ENCODE measurements at regions of chr2 and their contacts with region 1.

Region 1: GRCh38 chr2:240851078-240851991 is 17.3 kb upstream of the AGXT start:
- DNase-seq: peak; percentile 84
- ATAC-seq: peak; percentile 90 to 93 (median 91)
- H3K4me3 ChIP-seq: no peak overlapping the region
- H3K27ac ChIP-seq: no peak overlapping the region
- H3K4me1 ChIP-seq: peaks cover 0 to 3% (median 0%) of the 10 kb centered on the region in 9 donors
- H3K27me3 ChIP-seq: peaks cover 0 to 8% (median 0%) of the 10 kb centered on the region in 7 donors
- CTCF ChIP-seq: peak; percentile 85 to 98 (median 96)

Region 2: DNA sequence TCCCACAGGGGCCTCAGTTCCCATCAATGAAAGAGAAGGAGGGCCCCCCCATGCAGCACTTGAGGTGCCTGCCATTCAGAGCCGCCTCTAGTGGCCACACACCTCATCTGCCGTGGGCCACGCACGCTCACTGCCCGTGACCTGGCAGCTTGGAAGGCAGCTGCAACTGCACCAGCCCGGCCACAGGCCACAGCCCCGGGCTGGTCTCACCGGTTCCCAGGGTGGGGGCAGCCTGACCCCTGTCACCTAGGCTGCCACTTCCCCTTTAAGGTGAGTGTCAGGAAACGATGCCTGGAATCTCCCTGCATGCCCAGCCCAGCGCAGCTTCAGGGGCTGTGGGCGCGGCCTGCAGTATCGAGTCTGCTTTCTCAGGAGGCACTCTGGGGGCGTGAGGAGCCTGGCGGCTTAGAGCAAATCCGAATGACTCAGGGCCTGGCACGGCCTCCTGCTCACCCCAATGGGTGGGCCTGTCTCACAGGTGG is 42.1 kb after region 1 on chr2:
- intact Hi-C with region 1: no loop called
- DNase-seq: no peak
- ATAC-seq: no peak
- H3K4me3 ChIP-seq: no peak overlapping the region
- H3K27ac ChIP-seq: no peak overlapping the region
- H3K4me1 ChIP-seq: peaks cover 4 to 22% (median 12%) of the 10 kb centered on the region in 9 donors
- H3K27me3 ChIP-seq: peaks cover 0 to 3% (median 0%) of the 10 kb centered on the region in 7 donors
- CTCF ChIP-seq: no peak

Region 3: DNA sequence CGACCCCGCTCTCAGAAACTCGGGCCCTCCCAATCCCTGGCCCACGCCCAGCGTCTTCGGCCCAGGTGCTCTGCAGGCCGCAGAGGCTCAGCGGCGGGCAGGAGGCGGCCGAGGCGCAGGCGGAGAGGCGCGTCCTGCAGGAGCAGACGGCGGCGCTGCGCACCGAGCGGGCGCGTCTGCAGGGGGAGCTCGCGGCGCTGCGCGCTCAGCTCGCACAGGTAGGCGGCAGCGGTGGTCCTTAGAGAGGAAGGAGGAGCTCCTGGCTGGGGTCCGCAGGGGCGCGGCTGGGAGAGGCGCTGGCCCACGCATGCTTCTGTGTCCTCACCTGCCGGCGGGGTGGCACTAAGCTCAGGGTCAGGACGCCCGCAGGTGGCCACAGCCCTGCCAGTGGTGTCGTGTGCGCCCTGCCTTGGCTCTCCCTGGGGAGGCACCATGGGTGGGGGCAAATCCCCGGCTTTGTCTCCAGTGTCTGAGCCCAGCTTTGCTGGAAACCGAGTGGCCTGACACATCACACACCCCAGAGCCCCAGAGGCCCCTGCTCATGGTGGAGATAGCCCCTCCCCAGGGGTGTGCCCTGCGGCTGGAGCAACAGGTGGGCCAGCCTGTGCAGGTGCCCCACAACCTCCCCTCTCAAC is 132.1 kb after region 1 on chr2:
- intact Hi-C with region 1: loop called in 4 of 10 experiments (anchors 2 to 10 kb)
- DNase-seq: peak in 1 of 2 donors; percentile 37
- ATAC-seq: peak; percentile 44 to 69 (median 58)
- H3K4me3 ChIP-seq: no peak overlapping the region
- H3K27ac ChIP-seq: no peak overlapping the region
- H3K4me1 ChIP-seq: peaks cover 9 to 20% (median 14%) of the 10 kb centered on the region in 9 donors
- H3K27me3 ChIP-seq: peaks cover 0 to 26% (median 16%) of the 10 kb centered on the region in 7 donors
- CTCF ChIP-seq: peak in 8 of 9 donors; percentile 43 to 68 (median 60)

Region 4: GRCh38 chr2:240998120-240998994 is 147.0 kb after region 1 on chr2 and contains the start of gene SNED1:
- intact Hi-C with region 1: loop called in 3 of 10 experiments (anchors 10 kb)
- DNase-seq: peak; percentile 90
- ATAC-seq: peak; percentile 85 to 93 (median 90)
- H3K4me3 ChIP-seq: peak within 1 kb of the TSS; percentile 25 to 88 (median 66)
- H3K27ac ChIP-seq: peak within 1 kb of the TSS; percentile 66 to 89 (median 81)
- H3K4me1 ChIP-seq: peaks cover 11 to 54% (median 28%) of the 10 kb centered on the region in 9 donors
- H3K27me3 ChIP-seq: peaks cover 0 to 14% (median 0%) of the 10 kb centered on the region in 7 donors
- CTCF ChIP-seq: no peak
- total RNA-seq, gene SNED1: 3.9 to 12.7 (median 6.3) TPM

Region 5: DNA sequence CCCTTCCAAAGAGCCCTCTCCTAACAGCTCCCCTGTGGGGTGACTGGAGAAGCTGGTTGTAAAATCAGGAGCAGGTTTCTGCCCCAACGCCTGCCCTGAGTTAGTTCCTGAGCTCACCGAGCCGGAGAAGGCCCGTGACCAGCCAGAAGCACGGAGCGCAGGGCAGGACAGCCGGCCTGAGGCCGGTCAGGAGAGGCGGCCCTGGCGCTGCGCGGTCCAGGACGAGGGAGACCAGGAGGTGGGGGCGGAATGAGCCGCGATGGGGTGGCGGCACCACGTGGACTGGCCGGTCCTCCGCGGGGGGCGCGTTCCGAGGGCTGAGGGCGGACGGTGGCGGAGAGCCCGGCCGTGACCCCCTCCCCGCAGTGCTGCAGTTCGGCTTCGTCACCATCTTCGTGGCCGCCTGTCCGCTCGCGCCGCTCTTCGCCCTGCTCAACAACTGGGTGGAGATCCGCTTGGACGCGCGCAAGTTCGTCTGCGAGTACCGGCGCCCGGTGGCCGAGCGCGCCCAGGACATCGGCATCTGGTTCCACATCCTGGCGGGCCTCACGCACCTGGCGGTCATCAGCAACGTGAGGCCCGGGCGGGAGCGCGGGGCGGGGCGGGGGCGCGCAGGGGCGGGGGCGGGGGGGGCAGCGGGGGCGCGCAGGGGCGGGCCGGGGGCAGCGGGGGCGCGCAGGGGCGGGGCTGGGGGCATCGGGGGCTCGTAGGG is 366.1 kb after region 1 on chr2:
- intact Hi-C with region 1: loop called in 1 of 10 experiments (anchors 10 kb)
- DNase-seq: peak; percentile 59 to 69
- ATAC-seq: peak; percentile 80 to 91 (median 85)
- H3K4me3 ChIP-seq: peak overlapping the region in 9 of 10 donors; percentile 40 to 68 (median 60)
- H3K27ac ChIP-seq: peak overlapping the region; percentile 14 to 92 (median 82)
- H3K4me1 ChIP-seq: peaks cover 7 to 17% (median 9%) of the 10 kb centered on the region in 9 donors
- H3K27me3 ChIP-seq: peaks cover 0 to 8% (median 0%) of the 10 kb centered on the region in 7 donors
- CTCF ChIP-seq: peak in 2 of 9 donors; percentile 9 to 14

Region 6: DNA sequence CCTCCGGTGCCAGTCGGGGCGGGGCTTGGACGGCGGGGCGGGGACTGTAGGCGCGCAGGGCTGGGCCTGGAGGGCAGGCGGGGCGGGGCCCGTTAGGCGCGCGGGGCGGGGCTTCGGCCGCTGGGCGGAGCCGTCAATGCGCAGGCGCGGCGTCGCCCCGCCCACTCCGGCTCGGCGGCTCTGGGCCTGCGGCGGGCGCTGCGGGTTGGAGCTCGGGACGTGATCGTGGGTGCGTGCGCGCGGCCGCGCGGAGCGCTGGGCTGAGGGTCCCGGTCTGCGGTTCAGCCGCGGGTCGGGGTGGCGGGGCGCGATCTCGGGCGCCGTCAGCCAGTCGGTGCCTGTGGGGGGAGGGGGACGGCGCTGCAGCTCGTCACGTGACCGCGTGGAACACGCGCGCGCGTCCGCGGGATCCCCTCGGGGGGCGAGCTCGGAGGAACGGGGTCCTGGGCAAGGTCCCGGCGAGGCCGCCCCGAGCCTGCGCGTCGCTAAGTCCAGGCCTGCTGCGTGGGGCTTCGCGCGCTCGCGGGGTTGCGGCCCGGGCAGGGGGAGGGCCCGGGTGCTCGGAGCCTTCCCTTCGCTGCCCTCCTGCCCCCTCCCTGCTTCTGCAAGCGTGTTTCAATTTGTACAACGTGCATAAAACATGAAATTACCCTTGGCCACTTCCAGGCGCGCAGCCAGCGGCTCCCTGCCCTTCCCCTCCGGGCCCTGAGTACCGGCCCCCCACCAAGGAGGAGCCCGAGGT is 883.3 kb after region 1 on chr2 and contains the start of gene D2HGDH:
- intact Hi-C with region 1: loop called in 2 of 10 experiments (anchors 10 kb)
- DNase-seq: peak; percentile 93 to 97
- ATAC-seq: peak; percentile 91 to 97 (median 94)
- H3K4me3 ChIP-seq: peak within 1 kb of the TSS; percentile 79 to 100 (median 92)
- H3K27ac ChIP-seq: peak within 1 kb of the TSS; percentile 84 to 96 (median 94)
- H3K4me1 ChIP-seq: peaks cover 4 to 29% (median 16%) of the 10 kb centered on the region in 9 donors
- H3K27me3 ChIP-seq: no peaks in the 10 kb centered on the region
- CTCF ChIP-seq: no peak
- total RNA-seq, gene D2HGDH: 15.1 to 22.8 (median 19.1) TPM

Measured in heart right ventricle (tissue), 16 donors.